Caco-2 (cell line): ENCODE measurements at regions of chr12 and their contacts with region 1.

Region 1: GRCh38 chr12:751192-751998 is 984 bp upstream of the WNK1 start:
- DNase-seq: peak; percentile 98
- H3K4me3 ChIP-seq: peak overlapping the region; percentile 42
- H3K4me3 Mint-ChIP-seq: no peak overlapping the region
- H3K27ac Mint-ChIP-seq: no peak overlapping the region
- H3K4me1 ChIP-seq: peaks cover 14% of the 10 kb centered on the region
- H3K4me1 Mint-ChIP-seq: peaks cover 20% of the 10 kb centered on the region
- H3K27me3 ChIP-seq: no peaks in the 10 kb centered on the region
- H3K27me3 Mint-ChIP-seq: no peaks in the 10 kb centered on the region
- CTCF ChIP-seq: peak; percentile 88 to 95

Region 2: DNA sequence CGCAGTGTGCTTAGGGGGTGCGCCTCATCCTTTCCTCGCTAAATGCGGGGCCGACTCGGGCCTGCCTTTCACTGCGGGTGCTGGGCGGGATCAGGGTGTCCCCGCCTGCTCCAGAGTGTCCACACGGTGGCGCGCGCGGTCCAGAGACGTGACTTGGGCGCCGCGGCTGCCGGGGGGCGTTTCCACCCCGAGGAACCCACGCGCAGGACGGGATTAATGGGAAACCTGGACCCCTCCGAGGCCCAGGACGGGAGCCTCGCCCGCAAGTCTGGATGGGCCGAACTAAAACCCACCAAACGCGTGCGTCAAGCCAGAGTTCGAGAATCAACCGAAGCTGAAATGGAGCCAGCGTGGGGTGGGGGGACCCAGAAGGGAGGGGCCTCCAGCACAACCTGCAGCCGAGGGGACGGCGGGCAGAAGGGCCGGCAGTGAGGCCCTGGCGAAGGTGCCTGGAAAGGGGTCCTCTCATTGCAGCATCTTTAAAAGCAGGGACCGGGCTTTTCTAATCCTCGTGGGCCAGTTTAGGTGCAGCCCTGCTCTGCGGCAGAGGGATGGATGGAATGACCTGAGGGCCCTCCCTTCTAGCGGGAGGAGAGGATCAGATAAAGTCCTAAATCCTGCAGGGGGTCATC is 181.5 kb before region 1 on chr12:
- CTCF ChIA-PET with region 1: interaction called, 102 read pairs
- POLR2A ChIA-PET with region 1: interaction called, 36 read pairs
- intact Hi-C with region 1: loop called (anchors 1 kb)
- DNase-seq: peak; percentile 90 to 97
- H3K4me3 ChIP-seq: peak overlapping the region; percentile 80
- H3K4me3 Mint-ChIP-seq: peak overlapping the region; percentile 80
- H3K27ac Mint-ChIP-seq: peak overlapping the region; percentile 81
- H3K4me1 ChIP-seq: peaks cover 35% of the 10 kb centered on the region
- H3K4me1 Mint-ChIP-seq: peaks cover 35% of the 10 kb centered on the region
- H3K27me3 ChIP-seq: no peaks in the 10 kb centered on the region
- H3K27me3 Mint-ChIP-seq: no peaks in the 10 kb centered on the region
- CTCF ChIP-seq: peak; percentile 98 to 99

Region 3: GRCh38 chr12:614411-614970 is 136.9 kb before region 1 on chr12:
- CTCF ChIA-PET with region 1: interaction called, 46 read pairs
- POLR2A ChIA-PET with region 1: interaction called, 4 read pairs
- intact Hi-C with region 1: loop called (anchors 1 kb)
- DNase-seq: peak; percentile 64 to 67
- H3K4me3 ChIP-seq: no peak overlapping the region
- H3K4me3 Mint-ChIP-seq: no peak overlapping the region
- H3K27ac Mint-ChIP-seq: no peak overlapping the region
- H3K4me1 ChIP-seq: peaks cover 10% of the 10 kb centered on the region; the same call in 1 of the 2 replicates
- H3K4me1 Mint-ChIP-seq: peaks cover 6% of the 10 kb centered on the region
- H3K27me3 ChIP-seq: no peaks in the 10 kb centered on the region
- H3K27me3 Mint-ChIP-seq: no peaks in the 10 kb centered on the region
- CTCF ChIP-seq: peak in 1 of 2 experiments; percentile 29

Region 4: GRCh38 chr12:642633-643474 is 108.5 kb before region 1 on chr12:
- CTCF ChIA-PET with region 1: interaction called, 16 read pairs
- POLR2A ChIA-PET with region 1: interaction called, 9 read pairs
- intact Hi-C with region 1: loop called (anchors 1 kb)
- DNase-seq: peak; percentile 90 to 93
- H3K4me3 ChIP-seq: peak overlapping the region; percentile 56
- H3K4me3 Mint-ChIP-seq: peak overlapping the region; percentile 78
- H3K27ac Mint-ChIP-seq: peak overlapping the region; percentile 62
- H3K4me1 ChIP-seq: peaks cover 20% of the 10 kb centered on the region
- H3K4me1 Mint-ChIP-seq: peaks cover 34% of the 10 kb centered on the region
- H3K27me3 ChIP-seq: no peaks in the 10 kb centered on the region
- H3K27me3 Mint-ChIP-seq: no peaks in the 10 kb centered on the region
- CTCF ChIP-seq: peak; percentile 74 to 89

Region 5: DNA sequence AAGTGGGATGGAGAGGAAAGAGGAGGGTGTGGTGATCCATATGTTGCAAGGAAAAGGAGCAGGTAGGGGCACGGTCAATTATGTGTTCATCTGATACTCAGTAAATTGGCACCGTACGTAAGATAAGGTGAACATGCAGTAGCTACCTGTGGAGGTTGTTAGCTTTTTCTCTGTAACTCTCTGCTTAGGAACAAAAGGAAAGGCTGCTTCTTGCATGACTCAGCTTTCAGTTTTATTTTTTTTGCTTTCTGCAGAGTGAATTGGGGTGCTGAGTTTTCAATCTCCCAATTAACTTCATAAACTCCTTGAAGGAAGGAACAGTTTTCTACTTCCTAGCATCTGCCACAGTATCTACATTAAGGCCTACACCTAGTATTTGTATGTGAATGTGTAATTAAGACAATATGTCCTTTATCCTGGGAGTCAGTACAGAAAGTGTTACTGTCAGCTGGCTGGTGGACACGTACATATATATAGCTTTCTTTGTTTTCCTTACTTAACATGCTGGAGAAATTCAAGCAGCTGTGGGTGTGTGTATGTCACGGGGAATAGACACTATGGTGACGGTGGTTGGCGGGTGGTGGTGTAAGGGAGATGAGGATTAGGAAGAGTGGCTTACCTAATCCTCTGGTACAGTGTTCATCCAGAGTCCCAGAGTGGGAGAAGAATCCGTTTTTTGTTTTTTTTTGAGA is 39.1 kb before region 1 on chr12:
- CTCF ChIA-PET with region 1: interaction called, 12 read pairs
- POLR2A ChIA-PET with region 1: no interaction called
- intact Hi-C with region 1: no loop called
- DNase-seq: no peak
- H3K4me3 ChIP-seq: no peak overlapping the region
- H3K4me3 Mint-ChIP-seq: no peak overlapping the region
- H3K27ac Mint-ChIP-seq: no peak overlapping the region
- H3K4me1 ChIP-seq: peaks cover 5% of the 10 kb centered on the region; the same call in 1 of the 2 replicates
- H3K4me1 Mint-ChIP-seq: peaks cover 9% of the 10 kb centered on the region
- H3K27me3 ChIP-seq: no peaks in the 10 kb centered on the region
- H3K27me3 Mint-ChIP-seq: no peaks in the 10 kb centered on the region
- CTCF ChIP-seq: no peak

Region 6: DNA sequence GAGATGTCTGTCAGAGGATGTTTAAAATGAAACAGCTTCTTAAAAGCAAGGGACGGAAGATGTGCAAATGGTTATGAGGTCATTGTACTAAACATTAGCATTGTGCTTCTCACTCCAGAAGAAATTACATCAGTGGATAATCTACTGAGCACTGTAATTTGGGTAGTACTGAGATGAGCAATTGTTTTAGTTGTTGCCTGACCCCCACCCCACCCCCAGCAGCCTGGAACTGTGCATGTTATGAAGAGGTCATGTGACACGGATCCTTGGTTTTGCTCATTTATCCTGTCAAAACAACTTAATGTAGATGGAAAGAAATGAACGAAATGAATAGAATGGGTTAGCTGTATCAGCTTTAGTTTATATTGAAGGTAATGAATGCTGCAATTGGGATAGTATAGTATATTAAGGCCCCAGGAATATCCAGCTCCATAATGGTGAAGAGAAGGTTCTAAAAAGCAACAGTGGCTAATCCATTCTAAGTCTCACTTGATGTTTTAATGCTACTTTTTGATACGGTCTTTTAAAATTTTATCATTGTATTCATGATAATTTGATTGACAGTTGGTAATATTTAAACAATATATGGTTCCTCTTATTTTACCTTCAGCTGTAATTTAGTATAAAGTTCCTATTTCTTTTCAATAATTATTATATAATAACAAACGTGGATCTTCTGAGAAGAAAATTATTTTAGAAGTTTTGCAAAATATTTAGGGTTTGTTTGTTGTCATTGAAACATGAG is 59.4 kb after region 1 on chr12:
- CTCF ChIA-PET with region 1: interaction called, 10 read pairs
- POLR2A ChIA-PET with region 1: no interaction called
- intact Hi-C with region 1: loop called (anchors 2 kb)
- DNase-seq: no peak
- H3K4me3 ChIP-seq: no peak overlapping the region
- H3K4me3 Mint-ChIP-seq: no peak overlapping the region
- H3K27ac Mint-ChIP-seq: no peak overlapping the region
- H3K4me1 ChIP-seq: peaks cover 9% of the 10 kb centered on the region
- H3K4me1 Mint-ChIP-seq: peaks cover 17% of the 10 kb centered on the region
- H3K27me3 ChIP-seq: no peaks in the 10 kb centered on the region
- H3K27me3 Mint-ChIP-seq: no peaks in the 10 kb centered on the region
- CTCF ChIP-seq: no peak

Region 7: GRCh38 chr12:835754-836518 is 84.5 kb after region 1 on chr12:
- CTCF ChIA-PET with region 1: no interaction called
- POLR2A ChIA-PET with region 1: no interaction called
- intact Hi-C with region 1: no loop called
- DNase-seq: no peak
- H3K4me3 ChIP-seq: no peak overlapping the region
- H3K4me3 Mint-ChIP-seq: no peak overlapping the region
- H3K27ac Mint-ChIP-seq: no peak overlapping the region
- H3K4me1 ChIP-seq: no peaks in the 10 kb centered on the region
- H3K4me1 Mint-ChIP-seq: no peaks in the 10 kb centered on the region
- H3K27me3 ChIP-seq: no peaks in the 10 kb centered on the region
- H3K27me3 Mint-ChIP-seq: no peaks in the 10 kb centered on the region
- CTCF ChIP-seq: no peak